ENCODE measurements at regions of chr12 and their contacts with region 1.

Region 1: GRCh38 chr12:26884765-26885576 is 52.0 kb upstream of the ITPR2 start:
- DNase-seq: peak; percentile 62 to 88 (median 81)
- ATAC-seq: peak; percentile 99
- H3K4me3 ChIP-seq: peak overlapping the region; percentile 46
- H3K4me3 Mint-ChIP-seq: peak overlapping the region; percentile 46 to 80 (median 64)
- H3K27ac ChIP-seq: no peak overlapping the region
- H3K27ac Mint-ChIP-seq: no peak overlapping the region
- H3K4me1 ChIP-seq: peaks cover 0 to 3% of the 10 kb centered on the region in 2 donors
- H3K4me1 Mint-ChIP-seq: peaks cover 4 to 13% (median 7%) of the 10 kb centered on the region in 7 donors
- H3K27me3 ChIP-seq: no peaks in the 10 kb centered on the region
- H3K27me3 Mint-ChIP-seq: peaks cover 3 to 26% (median 6%) of the 10 kb centered on the region in 5 donors

Region 2: DNA sequence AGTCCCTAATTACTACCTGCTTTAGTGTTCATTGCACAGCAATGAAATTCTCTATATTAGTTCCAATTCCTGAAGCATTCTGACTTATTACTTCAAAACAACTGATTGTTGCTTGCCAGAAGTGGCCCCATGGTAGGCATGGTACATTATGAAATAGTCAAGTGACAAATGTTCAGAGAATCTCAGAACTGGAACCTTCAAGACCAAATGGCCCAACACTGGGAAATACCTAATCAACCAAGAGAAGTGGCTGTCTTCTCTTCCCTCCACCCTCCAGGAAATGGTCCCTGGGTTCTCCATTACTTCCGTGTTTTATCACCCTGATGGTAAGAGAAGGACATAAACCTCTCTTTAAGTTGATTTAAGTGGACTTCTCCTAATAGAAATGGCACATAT is 101.8 kb before region 1 on chr12:
- CTCF ChIA-PET with region 1: no interaction called
- POLR2A ChIA-PET with region 1: no interaction called
- intact Hi-C with region 1: loop called in 1 of 2 experiments (anchors 2 kb)
- DNase-seq: no peak
- ATAC-seq: no peak
- H3K4me3 ChIP-seq: no peak overlapping the region
- H3K4me3 Mint-ChIP-seq: no peak overlapping the region
- H3K27ac ChIP-seq: no peak overlapping the region
- H3K27ac Mint-ChIP-seq: no peak overlapping the region
- H3K4me1 ChIP-seq: no peaks in the 10 kb centered on the region
- H3K4me1 Mint-ChIP-seq: peaks cover 0 to 12% (median 4%) of the 10 kb centered on the region in 7 donors
- H3K27me3 ChIP-seq: no peaks in the 10 kb centered on the region
- H3K27me3 Mint-ChIP-seq: no peaks in the 10 kb centered on the region

Region 3: GRCh38 chr12:26867080-26867479 is 17.9 kb before region 1 on chr12:
- CTCF ChIA-PET with region 1: interaction called, 7 read pairs
- POLR2A ChIA-PET with region 1: no interaction called
- intact Hi-C with region 1: loop called in 1 of 2 experiments (anchors 2 kb)
- DNase-seq: peak in 2 of 9 donors; percentile 9 to 14
- ATAC-seq: peak; percentile 45
- H3K4me3 ChIP-seq: no peak overlapping the region
- H3K4me3 Mint-ChIP-seq: peak overlapping the region in 4 of 10 donors; percentile 31 to 59 (median 44)
- H3K27ac ChIP-seq: no peak overlapping the region
- H3K27ac Mint-ChIP-seq: peak overlapping the region in 3 of 9 donors; percentile 1 to 46 (median 3)
- H3K4me1 ChIP-seq: peaks cover 4 to 11% of the 10 kb centered on the region in 2 donors
- H3K4me1 Mint-ChIP-seq: peaks cover 19 to 26% (median 20%) of the 10 kb centered on the region in 7 donors
- H3K27me3 ChIP-seq: no peaks in the 10 kb centered on the region
- H3K27me3 Mint-ChIP-seq: peaks cover 0 to 18% (median 9%) of the 10 kb centered on the region in 5 donors

Region 4: DNA sequence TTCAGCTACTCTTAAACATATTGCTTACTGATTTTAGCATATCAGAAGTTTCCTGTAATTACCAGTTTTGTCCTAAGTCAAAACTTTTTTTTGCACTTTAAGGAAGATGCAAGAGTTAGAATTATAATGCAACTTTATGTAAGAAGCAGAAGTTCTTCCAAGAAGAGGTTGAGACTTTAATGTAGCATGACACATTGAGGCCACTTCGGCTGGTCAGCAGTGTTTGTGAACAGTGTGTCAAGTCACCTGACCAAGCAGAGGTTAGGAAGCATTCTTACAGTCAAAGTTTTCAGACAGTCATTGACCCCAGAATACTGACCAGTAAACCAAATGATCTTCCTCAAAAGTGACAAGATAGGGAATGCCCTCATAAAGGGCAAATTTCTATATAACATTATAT is 68.5 kb after region 1 on chr12:
- CTCF ChIA-PET with region 1: no interaction called
- POLR2A ChIA-PET with region 1: no interaction called
- intact Hi-C with region 1: no loop called
- DNase-seq: no peak
- ATAC-seq: peak; percentile 91
- H3K4me3 ChIP-seq: no peak overlapping the region
- H3K4me3 Mint-ChIP-seq: peak overlapping the region in 4 of 10 donors; percentile 13 to 50 (median 30)
- H3K27ac ChIP-seq: no peak overlapping the region
- H3K27ac Mint-ChIP-seq: peak overlapping the region in 6 of 9 donors; percentile 10 to 75 (median 58)
- H3K4me1 ChIP-seq: peaks cover 11 to 12% of the 10 kb centered on the region in 2 donors
- H3K4me1 Mint-ChIP-seq: peaks cover 18 to 69% (median 48%) of the 10 kb centered on the region in 7 donors
- H3K27me3 ChIP-seq: no peaks in the 10 kb centered on the region
- H3K27me3 Mint-ChIP-seq: no peaks in the 10 kb centered on the region

Region 5: DNA sequence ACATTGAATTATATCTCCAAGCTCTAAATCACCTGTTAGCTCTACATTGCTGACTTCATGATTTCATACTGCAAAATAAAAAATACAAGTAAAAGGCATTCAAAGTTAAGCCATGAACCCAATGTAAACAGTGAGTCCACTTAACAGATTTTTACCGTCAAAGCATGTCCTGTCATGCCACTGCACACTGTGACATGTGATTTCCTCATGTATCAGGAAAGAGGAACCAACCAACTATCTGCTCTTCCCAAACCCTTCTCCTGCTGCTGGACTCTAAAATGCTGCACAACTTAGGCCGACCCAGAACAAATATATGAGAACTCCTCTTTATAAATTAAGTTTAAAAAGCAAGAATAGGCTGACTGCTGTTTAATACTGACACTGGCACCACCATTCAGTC is 91.7 kb after region 1 on chr12:
- CTCF ChIA-PET with region 1: no interaction called
- POLR2A ChIA-PET with region 1: no interaction called
- intact Hi-C with region 1: no loop called
- DNase-seq: no peak
- ATAC-seq: no peak
- H3K4me3 ChIP-seq: no peak overlapping the region
- H3K4me3 Mint-ChIP-seq: no peak overlapping the region
- H3K27ac ChIP-seq: no peak overlapping the region
- H3K27ac Mint-ChIP-seq: peak overlapping the region in 3 of 9 donors; percentile 9 to 66 (median 62)
- H3K4me1 ChIP-seq: peaks cover 0 to 9% of the 10 kb centered on the region in 2 donors
- H3K4me1 Mint-ChIP-seq: peaks cover 3 to 17% (median 5%) of the 10 kb centered on the region in 7 donors
- H3K27me3 ChIP-seq: no peaks in the 10 kb centered on the region
- H3K27me3 Mint-ChIP-seq: no peaks in the 10 kb centered on the region